AG04449 (cell line): ENCODE measurements at regions of chr3 and their contacts with region 1.

Region 1: DNA sequence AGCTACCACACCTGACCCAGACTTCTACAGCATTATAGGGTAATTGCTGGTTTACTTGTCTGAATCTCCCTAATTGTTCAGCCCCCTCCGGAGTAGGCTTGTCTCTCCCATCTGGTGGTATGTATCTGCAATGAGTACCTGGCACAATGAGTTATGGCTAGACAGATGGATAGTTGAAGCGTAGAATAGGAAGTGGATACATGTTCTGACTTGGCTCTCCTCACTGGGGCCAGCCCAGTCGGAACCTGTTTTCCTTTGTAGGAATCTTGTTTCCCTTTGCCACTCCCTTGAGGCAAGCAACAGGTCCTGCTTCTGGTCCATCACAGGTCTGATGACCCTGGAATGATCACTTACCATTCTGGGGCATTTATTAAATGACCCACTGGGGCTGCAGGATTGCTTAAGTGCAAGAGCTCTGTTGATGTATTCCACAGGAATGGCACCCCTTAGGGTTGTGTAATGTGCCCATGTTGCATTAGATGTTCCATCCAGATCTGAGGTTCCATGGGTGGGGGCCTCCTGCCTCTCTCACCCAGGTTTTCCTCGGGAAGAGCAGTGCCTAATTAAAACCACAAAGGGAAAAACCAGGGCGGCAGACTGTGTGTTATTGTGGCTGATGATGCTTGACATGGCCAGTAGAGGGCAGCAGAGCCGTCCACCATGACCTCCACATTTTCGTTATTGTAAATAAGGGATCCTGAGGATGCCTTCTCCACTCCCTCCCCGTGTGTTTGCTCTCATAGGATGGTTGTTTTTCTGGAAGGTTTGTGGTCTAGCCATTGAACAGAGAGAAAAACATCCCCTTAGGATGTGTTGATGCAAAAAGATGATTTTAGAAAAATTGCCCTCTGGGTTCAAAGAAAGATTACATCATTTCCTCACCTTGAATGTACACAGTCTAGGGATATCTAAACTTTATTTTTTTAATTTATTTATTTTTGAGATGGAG is 58.0 kb downstream of the CMTM8 start:
- DNase-seq: no peak
- H3K4me3 ChIP-seq: no peak overlapping the region
- CTCF ChIP-seq: peak; percentile 90

Region 2: DNA sequence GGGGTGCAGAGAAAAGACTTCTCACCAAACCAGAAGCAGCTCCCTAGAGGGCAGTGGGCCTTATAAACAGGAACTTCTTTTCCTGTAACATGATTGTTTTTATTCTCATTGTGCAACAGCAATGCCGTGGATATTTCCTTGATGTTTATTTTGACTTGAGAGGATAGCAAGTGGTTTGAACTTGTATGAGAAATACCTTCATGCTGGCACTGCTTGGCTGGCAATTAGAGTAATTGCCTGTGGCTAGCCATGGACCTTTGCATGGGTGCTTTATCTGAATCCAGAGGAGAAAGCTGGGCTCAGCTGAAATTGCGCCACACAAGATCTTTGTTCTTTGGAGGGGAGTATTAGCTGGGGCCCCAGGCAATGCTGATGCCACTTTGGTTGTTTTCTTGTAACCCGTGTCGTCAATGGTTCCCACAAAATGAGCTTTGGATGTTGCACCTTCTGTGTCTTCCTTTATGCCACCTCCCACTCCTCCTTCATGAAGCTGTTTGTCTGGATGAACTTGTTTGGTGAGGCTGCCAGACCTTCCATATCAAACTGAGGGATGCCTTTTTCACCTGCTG is 20.2 kb before region 1 on chr3:
- CTCF ChIA-PET with region 1: interaction called, 17 read pairs
- POLR2A ChIA-PET with region 1: no interaction called
- DNase-seq: no peak
- H3K4me3 ChIP-seq: no peak overlapping the region
- CTCF ChIP-seq: no peak

Region 3: DNA sequence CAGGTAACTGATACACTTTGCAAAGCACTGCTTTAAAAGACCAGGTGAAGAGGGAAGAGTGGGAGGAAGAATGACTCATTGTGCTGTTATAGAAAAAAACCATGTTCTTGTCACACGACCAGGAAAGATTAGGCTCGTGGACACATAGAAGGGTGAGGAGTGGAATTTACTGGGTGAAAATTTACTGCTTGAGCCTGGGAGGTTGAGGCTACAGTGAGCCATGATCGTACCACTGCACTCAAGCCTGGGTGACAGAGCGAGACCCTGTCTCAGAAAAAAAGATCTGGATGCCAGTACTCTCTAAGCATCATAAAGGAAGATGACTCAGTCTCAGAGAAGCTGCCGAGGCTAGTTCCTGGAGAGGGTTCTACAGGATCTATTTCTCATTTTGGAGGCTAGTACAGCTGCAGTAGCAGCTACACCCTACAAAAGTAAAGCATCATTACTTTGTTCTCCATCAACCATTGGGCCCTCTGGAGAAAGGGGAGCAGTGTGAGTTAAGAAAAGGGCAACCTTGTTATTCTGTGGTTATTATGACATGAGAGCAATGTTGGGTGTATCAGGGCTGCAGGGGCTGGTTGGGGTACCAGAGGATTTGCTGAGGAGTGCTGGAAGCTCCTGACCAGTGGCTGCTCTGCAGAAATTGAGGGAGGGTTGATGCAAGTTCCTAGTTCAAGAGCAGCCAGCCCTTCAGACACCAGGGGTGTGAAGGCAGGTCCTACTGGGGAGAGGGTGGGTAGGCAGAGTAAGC is 17.4 kb after region 1 on chr3:
- CTCF ChIA-PET with region 1: interaction called, 20 read pairs
- POLR2A ChIA-PET with region 1: no interaction called
- DNase-seq: no peak
- H3K4me3 ChIP-seq: no peak overlapping the region
- CTCF ChIP-seq: no peak